PC-9 (cell line): ENCODE measurements at regions of chr7 and their contacts with region 1.

Region 1: DNA sequence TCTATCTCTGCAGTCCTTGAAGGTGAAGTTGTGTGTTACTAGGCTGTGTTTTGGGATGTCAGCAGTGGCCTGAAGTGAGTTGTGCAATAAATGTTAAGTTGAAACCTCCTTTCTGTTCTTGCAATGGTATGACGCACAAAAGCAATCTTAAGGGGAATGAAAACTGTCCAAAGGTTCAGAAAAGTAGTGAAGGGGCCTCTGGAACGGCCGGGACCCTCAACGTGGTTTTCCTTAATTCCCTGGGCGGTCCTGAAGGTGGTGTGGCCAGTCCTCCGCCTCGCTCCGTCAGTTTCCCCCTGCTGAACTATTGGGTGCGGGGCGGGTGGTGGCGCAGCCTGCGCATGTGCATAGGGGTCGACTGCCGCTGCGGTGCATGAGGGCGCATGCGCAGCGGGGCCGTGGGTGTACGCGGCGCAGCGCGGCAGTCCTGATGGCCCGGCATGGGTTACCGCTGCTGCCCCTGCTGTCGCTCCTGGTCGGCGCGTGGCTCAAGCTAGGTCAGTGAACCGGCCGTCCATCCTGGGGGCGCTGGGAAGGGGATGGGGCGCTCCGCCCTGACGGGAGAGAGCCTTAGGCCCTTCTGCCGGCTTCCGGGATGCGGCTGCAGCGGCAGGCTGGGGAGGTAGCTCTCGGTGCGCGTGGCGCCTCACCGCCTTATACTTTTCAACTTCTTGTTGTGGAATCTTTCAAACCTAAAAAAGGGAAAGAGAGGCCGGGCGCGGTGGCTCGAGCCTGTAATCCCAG is at the start of gene SUMF2:
- DNase-seq: peak; percentile 90 to 97
- H3K4me3 ChIP-seq: peak within 1 kb of the TSS; percentile 69
- H3K27ac ChIP-seq: peak within 1 kb of the TSS; percentile 71
- H3K4me1 ChIP-seq: peaks cover 58% of the 10 kb centered on the region
- H3K27me3 ChIP-seq: no peaks in the 10 kb centered on the region
- CTCF ChIP-seq: peak; percentile 49; the same call in 1 of the 2 replicates
- total RNA-seq, gene SUMF2: 256 and 305 TPM in 2 replicates

Region 2: GRCh38 chr7:55438757-55439525 is 625.1 kb before region 1 on chr7:
- CTCF ChIA-PET with region 1: interaction called, 16 read pairs
- POLR2A ChIA-PET with region 1: no interaction called
- intact Hi-C with region 1: no loop called
- DNase-seq: peak in 1 of 2 experiments; percentile 37
- H3K4me3 ChIP-seq: no peak overlapping the region
- H3K27ac ChIP-seq: no peak overlapping the region
- H3K4me1 ChIP-seq: no peaks in the 10 kb centered on the region
- H3K27me3 ChIP-seq: no peaks in the 10 kb centered on the region
- CTCF ChIP-seq: no peak

Region 3: DNA sequence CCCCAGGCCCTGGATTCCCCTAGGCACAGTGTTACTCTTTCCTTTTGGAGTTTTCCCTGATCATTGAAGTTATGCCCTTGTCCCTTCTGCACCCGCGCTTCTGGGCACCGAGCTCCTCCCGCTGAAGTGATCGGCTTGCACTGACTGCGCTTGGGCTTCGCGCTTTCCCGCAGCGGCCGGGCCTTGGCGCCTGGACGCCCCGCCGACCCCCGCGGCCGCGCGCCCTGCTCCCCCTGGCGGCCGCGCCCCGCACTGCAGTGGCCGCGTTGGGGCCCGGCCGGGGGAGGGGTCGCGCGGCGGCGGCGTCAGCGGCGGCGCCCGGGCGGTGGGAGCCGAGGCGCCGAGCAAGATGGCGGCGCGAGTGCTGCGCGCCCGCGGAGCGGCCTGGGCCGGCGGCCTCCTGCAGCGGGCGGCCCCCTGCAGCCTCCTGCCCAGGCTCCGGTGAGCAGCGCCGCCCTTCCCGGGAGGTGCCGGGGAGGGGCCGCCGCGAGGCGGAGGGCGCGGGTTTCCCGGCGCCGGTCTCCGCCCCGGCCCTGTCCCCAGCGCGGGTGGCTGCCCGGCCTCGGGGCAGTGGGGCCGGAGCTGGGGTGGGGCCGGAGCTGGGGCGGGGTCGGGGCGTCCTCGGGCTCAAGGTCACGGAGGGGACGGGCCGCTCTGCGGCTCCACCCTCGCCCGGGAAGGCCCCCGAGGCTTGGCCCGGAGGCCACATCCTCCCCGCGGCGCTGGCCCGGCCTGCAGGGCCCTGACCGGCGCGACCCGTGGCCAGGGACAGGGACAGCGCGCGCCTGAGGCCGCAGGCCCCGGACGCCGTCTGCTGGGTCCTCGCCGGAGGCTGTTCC is 99.6 kb before region 1 on chr7 and contains the start of gene NIPSNAP2:
- CTCF ChIA-PET with region 1: interaction called, 10 read pairs
- POLR2A ChIA-PET with region 1: interaction called, 4 read pairs
- intact Hi-C with region 1: no loop called
- DNase-seq: peak; percentile 63 to 89
- H3K4me3 ChIP-seq: peak within 1 kb of the TSS; percentile 67
- H3K27ac ChIP-seq: peak within 1 kb of the TSS; percentile 54
- H3K4me1 ChIP-seq: peaks cover 19% of the 10 kb centered on the region
- H3K27me3 ChIP-seq: no peaks in the 10 kb centered on the region
- CTCF ChIP-seq: peak; percentile 64
- total RNA-seq, gene NIPSNAP2: 96.1 and 97.5 TPM in 2 replicates

Region 4: GRCh38 chr7:56033671-56034432 is 30.2 kb before region 1 on chr7:
- CTCF ChIA-PET with region 1: no interaction called
- POLR2A ChIA-PET with region 1: interaction called, 11 read pairs
- intact Hi-C with region 1: no loop called
- DNase-seq: peak; percentile 73 to 79
- H3K4me3 ChIP-seq: peak overlapping the region; percentile 55
- H3K27ac ChIP-seq: peak overlapping the region; percentile 45
- H3K4me1 ChIP-seq: peaks cover 5% of the 10 kb centered on the region
- H3K27me3 ChIP-seq: no peaks in the 10 kb centered on the region
- CTCF ChIP-seq: peak; percentile 35; the same call in 1 of the 2 replicates

Region 5: DNA sequence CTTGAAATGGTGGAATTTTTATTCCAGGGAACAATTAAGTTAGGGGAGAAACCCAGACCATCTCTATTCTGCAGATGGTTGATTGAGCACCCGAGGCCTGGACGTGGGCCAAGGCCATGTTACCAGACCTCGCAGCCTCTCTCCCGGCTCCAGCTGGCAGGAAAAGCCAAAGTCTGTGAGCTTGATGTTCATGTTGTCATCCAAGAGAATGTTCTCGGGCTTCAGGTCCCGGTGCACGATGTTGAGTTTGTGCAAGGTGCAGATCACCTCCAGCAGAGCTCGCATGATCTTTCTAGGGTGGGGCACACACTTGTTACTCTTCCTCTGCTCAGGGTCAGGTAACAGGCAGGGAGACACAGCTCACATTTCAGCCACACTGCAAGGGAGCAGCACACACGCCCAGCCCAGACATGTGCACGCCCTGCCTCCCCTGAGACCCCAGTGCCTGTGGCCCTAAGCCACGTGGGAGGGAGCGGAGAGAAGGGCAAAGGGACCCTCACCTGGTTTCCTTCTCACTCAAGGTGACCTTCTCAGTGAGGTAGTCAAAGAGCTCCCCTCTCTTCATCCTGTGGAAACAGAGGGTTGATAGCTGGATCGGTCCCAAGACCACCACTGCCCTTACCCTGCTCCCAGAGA is 19.2 kb after region 1 on chr7:
- CTCF ChIA-PET with region 1: no interaction called
- POLR2A ChIA-PET with region 1: interaction called, 37 read pairs
- intact Hi-C with region 1: no loop called
- DNase-seq: no peak
- H3K4me3 ChIP-seq: no peak overlapping the region
- H3K27ac ChIP-seq: no peak overlapping the region
- H3K4me1 ChIP-seq: no peaks in the 10 kb centered on the region
- H3K27me3 ChIP-seq: no peaks in the 10 kb centered on the region
- CTCF ChIP-seq: no peak

Region 6: GRCh38 chr7:56106108-56107073 is 42.3 kb after region 1 on chr7 and contains the start of gene CHCHD2:
- CTCF ChIA-PET with region 1: interaction called, 8 read pairs
- POLR2A ChIA-PET with region 1: no interaction called
- intact Hi-C with region 1: loop called (anchors 5 kb)
- DNase-seq: peak; percentile 99 to 100
- H3K4me3 ChIP-seq: peak within 1 kb of the TSS; percentile 74
- H3K27ac ChIP-seq: peak within 1 kb of the TSS; percentile 73
- H3K4me1 ChIP-seq: peaks cover 25% of the 10 kb centered on the region
- H3K27me3 ChIP-seq: no peaks in the 10 kb centered on the region
- CTCF ChIP-seq: no peak
- total RNA-seq, gene CHCHD2: 978 and 1,041 TPM in 2 replicates

Region 7: GRCh38 chr7:56199639-56200038 is 135.6 kb after region 1 on chr7:
- CTCF ChIA-PET with region 1: no interaction called
- POLR2A ChIA-PET with region 1: no interaction called
- intact Hi-C with region 1: no loop called
- DNase-seq: peak in 1 of 2 experiments; percentile 57
- H3K4me3 ChIP-seq: no peak overlapping the region
- H3K27ac ChIP-seq: no peak overlapping the region
- H3K4me1 ChIP-seq: peaks cover 42% of the 10 kb centered on the region
- H3K27me3 ChIP-seq: no peaks in the 10 kb centered on the region
- CTCF ChIP-seq: no peak